ENCODE measurements at regions of chr1 and their contacts with region 1.

Region 1: GRCh38 chr1:193767886-193768285 is 581.5 kb upstream of the B3GALT2 start:
- DNase-seq: no peak
- ATAC-seq: no peak
- H3K4me3 Mint-ChIP-seq: no peak overlapping the region
- H3K27ac Mint-ChIP-seq: no peak overlapping the region
- H3K4me1 Mint-ChIP-seq: no peaks in the 10 kb centered on the region
- H3K27me3 Mint-ChIP-seq: no peaks in the 10 kb centered on the region
- CTCF ChIP-seq: no peak

Region 2: DNA sequence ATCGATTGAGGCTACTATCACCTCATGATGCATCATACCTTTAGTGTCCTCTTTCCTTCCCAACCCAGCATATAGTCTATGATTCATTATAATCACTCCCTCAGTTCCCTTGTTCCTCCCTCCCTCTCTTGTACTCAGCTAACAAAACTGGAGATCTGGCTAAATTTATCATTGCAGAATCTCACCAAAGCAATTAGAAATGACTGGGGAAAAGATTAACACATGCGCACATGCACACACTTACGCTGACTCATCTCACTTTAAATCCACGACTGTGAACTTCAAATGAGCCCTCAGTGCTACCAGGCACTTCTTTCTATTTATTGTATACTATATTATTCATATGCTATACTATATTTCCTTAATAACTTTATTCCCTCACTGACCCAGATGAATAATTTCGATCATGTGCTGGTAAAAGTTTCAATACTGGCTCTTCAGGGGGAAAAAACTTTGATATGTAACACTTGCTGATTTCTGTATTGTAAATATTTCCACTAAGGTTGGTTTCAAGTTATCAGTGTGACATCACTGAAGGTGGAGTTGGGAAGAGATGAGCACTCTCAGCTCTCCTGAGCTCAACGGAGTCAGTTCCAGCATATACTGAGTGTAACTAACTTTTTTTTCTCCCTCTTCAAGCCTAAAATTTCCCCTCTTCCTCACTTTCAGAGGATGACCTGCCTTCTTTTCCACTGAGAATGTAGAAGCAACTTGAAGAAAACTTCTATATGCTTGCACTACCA is 32.2 kb after region 1 on chr1:
- CTCF ChIA-PET with region 1: no interaction called
- POLR2A ChIA-PET with region 1: interaction called, 15 read pairs
- intact Hi-C with region 1: no loop called
- DNase-seq: no peak
- ATAC-seq: no peak
- H3K4me3 Mint-ChIP-seq: no peak overlapping the region
- H3K27ac Mint-ChIP-seq: no peak overlapping the region
- H3K4me1 Mint-ChIP-seq: no peaks in the 10 kb centered on the region
- H3K27me3 Mint-ChIP-seq: no peaks in the 10 kb centered on the region
- CTCF ChIP-seq: no peak